ENCODE measurements at regions of chrX and their contacts with region 1.

Region 1: GRCh38 chrX:57918750-57919436 is 8.6 kb upstream of the ZXDA start:
- DNase-seq: no peak
- ATAC-seq: peak; percentile 82
- H3K4me3 ChIP-seq: peak overlapping the region; percentile 7 to 33
- H3K27ac ChIP-seq: no peak overlapping the region
- H3K4me1 ChIP-seq: no peaks in the 10 kb centered on the region
- H3K27me3 ChIP-seq: no peaks in the 10 kb centered on the region
- CTCF ChIP-seq: peak; percentile 56

Region 2: DNA sequence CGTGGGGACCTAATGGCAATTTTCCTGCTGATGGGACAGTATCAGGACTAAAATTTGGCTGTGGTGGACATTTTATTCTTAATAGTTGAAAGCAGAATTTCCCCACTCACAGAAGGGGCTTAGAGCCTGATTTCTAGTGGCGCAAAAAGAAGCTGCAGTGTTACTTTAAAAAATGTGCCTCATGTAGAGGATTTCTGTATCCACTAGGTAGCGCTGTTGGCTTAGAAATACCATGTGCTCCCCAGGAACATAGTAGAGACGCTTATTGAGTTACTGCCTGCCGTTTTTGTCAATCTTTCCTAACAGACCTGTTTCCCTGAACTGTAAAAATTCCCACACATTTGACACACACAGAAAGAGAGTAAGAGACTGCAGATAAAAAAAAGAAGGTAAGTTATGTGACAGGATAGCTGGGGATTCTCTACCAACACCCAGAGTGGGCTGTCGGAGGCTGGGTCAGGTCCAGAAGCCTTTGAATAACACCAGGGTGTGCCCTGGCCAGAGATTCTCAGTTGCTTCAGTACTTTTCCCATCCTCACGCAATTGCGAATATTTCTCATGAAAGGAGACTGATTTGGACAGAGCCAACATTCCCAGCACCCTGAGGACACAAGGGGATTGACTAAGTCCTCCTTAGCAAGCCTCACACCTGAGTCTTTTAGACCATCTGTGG is 97.1 kb before region 1 on chrX:
- CTCF ChIA-PET with region 1: no interaction called
- POLR2A ChIA-PET with region 1: no interaction called
- in situ Hi-C with region 1: no loop called
- intact Hi-C with region 1: loop called (anchors 2 kb)
- DNase-seq: no peak
- ATAC-seq: peak; percentile 92
- H3K4me3 ChIP-seq: peak overlapping the region; percentile 48 to 67
- H3K27ac ChIP-seq: peak overlapping the region; percentile 42
- H3K4me1 ChIP-seq: 0 out of 2 replicates have a peak, but pooled peaks cover 2% of the 10 kb centered on the region
- H3K27me3 ChIP-seq: no peaks in the 10 kb centered on the region
- CTCF ChIP-seq: peak; percentile 69